Thyroid gland (tissue), 4 donors: ENCODE measurements at regions of chr13 and their contacts with region 1.

Region 1: DNA sequence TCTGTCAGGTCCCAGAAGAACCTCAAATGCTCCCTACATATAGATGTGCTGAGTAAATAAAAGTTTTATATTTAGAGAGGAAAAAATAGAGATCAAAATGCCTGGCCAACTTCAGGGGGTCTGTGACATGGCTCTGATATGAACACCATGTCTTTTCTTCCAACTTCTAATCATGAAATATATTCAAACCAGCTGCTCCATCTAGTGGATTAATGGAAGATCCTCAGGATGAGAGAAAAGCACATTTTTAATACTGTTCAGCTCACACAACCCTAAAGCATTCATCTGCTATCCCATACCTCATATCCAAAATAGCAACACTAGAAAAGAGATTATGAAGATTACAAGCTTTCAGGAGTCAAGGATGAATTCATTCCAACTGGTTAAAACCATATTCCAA is 56.0 kb upstream of the DOCK9 start:
- DNase-seq: no peak
- H3K4me3 ChIP-seq: no peak overlapping the region
- H3K27ac ChIP-seq: peak overlapping the region in 2 of 3 donors; percentile 55 to 76
- H3K4me1 ChIP-seq: peaks cover 21 to 36% of the 10 kb centered on the region in 2 donors
- H3K27me3 ChIP-seq: no peaks in the 10 kb centered on the region
- CTCF ChIP-seq: peak; percentile 18 to 78 (median 58)
- POLR2A ChIP-seq: no peak

Region 2: GRCh38 chr13:98842864-98843481 is 190.8 kb before region 1 on chr13:
- intact Hi-C with region 1: loop called (anchors 2 kb)
- DNase-seq: peak; percentile 55 to 68
- H3K4me3 ChIP-seq: no peak overlapping the region
- H3K27ac ChIP-seq: no peak overlapping the region
- H3K4me1 ChIP-seq: peaks cover 0 to 5% of the 10 kb centered on the region in 2 donors
- H3K27me3 ChIP-seq: no peaks in the 10 kb centered on the region
- CTCF ChIP-seq: peak; percentile 33 to 86 (median 68)
- POLR2A ChIP-seq: no peak

Region 3: DNA sequence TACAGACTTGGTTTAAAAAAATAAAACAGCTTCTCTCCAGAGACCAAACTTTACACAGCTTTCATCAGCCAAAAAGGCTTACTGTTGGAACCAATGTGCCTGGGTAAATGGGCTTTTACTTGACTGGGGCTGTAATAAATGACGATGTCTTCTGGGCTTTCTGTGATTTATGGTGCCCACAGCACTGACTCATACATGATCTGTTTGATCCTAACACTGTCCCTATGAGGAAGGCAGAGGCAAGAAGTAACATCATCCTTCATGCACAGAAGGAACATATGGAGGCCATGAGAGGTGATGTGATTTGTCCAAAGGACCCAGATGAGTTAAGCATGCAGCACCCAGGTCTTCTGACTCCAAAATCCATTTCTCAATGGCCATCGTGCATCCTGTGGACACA is 133.4 kb before region 1 on chr13:
- intact Hi-C with region 1: no loop called
- DNase-seq: no peak
- H3K4me3 ChIP-seq: no peak overlapping the region
- H3K27ac ChIP-seq: no peak overlapping the region
- H3K4me1 ChIP-seq: no peaks in the 10 kb centered on the region
- H3K27me3 ChIP-seq: no peaks in the 10 kb centered on the region
- CTCF ChIP-seq: no peak
- POLR2A ChIP-seq: no peak

Region 4: GRCh38 chr13:98927951-98928927 is 105.6 kb before region 1 on chr13:
- intact Hi-C with region 1: loop called (anchors 10 kb)
- DNase-seq: no peak
- H3K4me3 ChIP-seq: no peak overlapping the region
- H3K27ac ChIP-seq: peak overlapping the region; percentile 14 to 44 (median 39)
- H3K4me1 ChIP-seq: peaks cover 18 to 23% of the 10 kb centered on the region in 2 donors
- H3K27me3 ChIP-seq: no peaks in the 10 kb centered on the region
- CTCF ChIP-seq: no peak
- POLR2A ChIP-seq: no peak

Region 5: DNA sequence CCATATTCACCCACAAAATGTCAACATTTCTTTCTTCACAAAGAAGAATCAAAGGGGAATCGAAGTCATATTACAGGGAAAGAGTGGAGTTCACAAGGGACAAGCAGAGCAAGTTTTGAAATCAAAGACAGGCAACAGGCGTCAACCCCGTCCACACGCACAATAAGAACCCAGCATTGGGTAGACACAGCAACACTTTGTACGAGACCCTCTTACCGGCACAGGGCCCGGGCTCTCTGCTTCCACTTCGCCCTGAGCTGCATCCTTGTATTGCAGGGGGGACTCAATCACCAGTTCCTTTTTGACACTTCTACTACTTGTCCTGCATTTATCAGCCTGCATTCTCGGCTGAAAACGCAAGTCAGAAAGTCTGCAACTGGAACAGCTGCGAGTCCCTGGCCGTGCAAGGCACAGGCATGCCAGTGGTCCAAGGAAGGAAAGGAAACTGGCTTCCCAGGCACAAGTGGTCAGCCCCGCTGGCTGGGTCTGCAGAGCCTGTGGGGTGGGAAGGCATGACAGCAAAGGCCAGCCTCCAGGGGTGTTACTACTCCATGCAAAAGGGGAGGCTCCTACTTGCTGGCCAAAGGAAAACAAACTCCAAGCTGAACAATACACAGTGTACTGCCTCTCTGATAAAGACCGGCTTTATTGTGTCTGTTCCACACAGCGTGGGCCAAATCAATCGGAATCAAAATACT is 56.1 kb before region 1 on chr13 and contains the start of gene DOCK9:
- intact Hi-C with region 1: loop called (anchors 10 kb)
- DNase-seq: peak; percentile 75 to 80
- H3K4me3 ChIP-seq: peak within 1 kb of the TSS in 2 of 3 donors; percentile 3 to 8
- H3K27ac ChIP-seq: peak within 1 kb of the TSS; percentile 50 to 76 (median 60)
- H3K4me1 ChIP-seq: peaks cover 48 to 57% of the 10 kb centered on the region in 2 donors
- H3K27me3 ChIP-seq: no peaks in the 10 kb centered on the region
- CTCF ChIP-seq: no peak
- POLR2A ChIP-seq: peak in 1 of 2 donors; percentile 76
- total RNA-seq, gene DOCK9: 126 to 240 (median 160) TPM